ENCODE measurements at regions of chr16 and their contacts with region 1.

Region 1: GRCh38 chr16:31873556-31874365 is at the start of gene ZNF267:
- DNase-seq: peak; percentile 93 to 96
- ATAC-seq: peak; percentile 96 to 100 (median 97)
- H3K4me3 ChIP-seq: peak within 1 kb of the TSS; percentile 99
- H3K27ac ChIP-seq: peak within 1 kb of the TSS; percentile 89
- H3K4me1 ChIP-seq: no peaks in the 10 kb centered on the region
- H3K27me3 ChIP-seq: no peaks in the 10 kb centered on the region
- CTCF ChIP-seq: no peak
- total RNA-seq, gene ZNF267: 4.1 to 9.9 (median 8.3) TPM

Region 2: DNA sequence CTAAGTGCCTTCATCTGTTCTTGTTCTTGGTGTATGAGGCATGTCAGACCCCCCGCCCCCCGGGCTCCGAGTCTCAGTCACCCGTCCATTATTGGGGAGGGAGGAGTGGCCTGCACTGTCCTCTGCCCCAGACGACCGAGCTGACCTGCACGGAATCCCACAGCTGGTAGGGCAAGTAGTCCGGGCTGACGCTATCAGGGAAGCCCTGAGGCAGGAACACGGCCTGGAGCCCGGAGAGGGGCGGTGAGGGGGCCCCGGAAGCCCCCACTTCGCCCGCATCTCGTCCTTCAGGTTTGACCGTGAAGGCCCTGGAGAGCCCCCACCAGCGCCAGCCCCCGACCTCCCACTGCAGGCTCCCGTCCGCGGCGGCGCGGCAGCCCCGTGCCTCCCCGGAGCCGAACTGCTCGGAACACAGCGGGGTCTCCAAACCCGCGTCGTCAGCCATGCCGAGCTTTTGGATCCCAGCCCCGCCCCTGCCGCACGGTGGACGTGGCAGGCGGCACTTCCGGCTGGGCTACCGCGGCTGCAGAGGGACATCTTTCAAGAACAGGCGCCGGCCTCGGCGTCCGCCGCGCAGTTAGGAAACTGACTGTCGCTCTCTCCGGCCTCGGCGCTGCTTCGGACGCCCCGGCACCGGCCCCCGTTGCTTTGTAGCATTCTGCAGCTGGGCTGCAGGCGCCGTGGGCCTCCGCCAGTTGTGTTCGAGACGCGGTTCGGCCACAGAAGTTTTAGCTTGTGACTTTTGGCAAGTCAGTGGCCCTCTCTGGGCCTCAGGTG is 365.6 kb before region 1 on chr16 and contains the start of gene RUSF1:
- intact Hi-C with region 1: loop called in 1 of 2 experiments (anchors 10 kb)
- DNase-seq: peak; percentile 92 to 96
- ATAC-seq: peak; percentile 97 to 99 (median 98)
- H3K4me3 ChIP-seq: peak within 1 kb of the TSS; percentile 92
- H3K27ac ChIP-seq: peak within 1 kb of the TSS; percentile 96
- H3K4me1 ChIP-seq: peaks cover 21% of the 10 kb centered on the region
- H3K27me3 ChIP-seq: no peaks in the 10 kb centered on the region
- CTCF ChIP-seq: no peak
- total RNA-seq, gene RUSF1: 6.9 to 16.2 (median 11.9) TPM

Region 3: DNA sequence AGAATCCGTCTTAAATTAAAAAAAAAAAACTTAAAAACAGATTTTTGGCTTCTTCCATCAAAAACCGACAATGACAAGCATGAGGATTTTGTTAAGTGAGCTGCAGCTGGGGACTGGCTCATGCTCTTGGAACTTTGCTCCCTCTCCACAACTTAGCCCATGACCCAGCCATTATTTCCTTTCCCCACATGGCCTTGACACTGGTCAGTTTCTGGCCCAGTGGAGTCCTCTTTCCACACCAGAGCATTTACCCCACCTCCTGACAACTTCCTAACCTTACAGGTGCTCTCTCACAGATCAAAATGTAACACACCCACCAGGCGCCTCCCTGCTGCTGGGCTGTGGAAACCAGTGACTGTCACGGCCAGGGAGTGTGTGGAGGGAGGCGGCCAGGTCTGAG is 62.9 kb before region 1 on chr16:
- intact Hi-C with region 1: no loop called
- DNase-seq: no peak
- ATAC-seq: no peak
- H3K4me3 ChIP-seq: no peak overlapping the region
- H3K27ac ChIP-seq: no peak overlapping the region
- H3K4me1 ChIP-seq: no peaks in the 10 kb centered on the region
- H3K27me3 ChIP-seq: no peaks in the 10 kb centered on the region
- CTCF ChIP-seq: no peak

Region 4: DNA sequence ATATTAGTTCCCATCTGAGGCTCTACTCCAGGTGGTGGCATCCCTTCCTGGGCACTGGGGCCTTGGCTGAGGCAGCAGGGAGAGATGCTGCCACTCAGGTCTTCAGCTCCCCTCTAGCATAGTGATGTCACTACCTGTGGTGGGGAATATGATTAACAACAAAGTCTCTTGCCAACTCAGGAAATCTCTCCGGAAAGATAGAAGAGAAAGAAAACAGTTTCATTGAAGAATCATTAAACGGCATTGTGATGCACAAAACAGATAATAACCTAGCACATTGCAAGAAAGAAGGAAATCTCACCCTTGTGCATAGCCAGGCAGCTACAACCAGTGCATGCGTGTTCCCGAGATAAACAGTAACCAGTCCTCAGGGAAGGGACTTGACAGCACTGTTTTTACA is 12.3 kb before region 1 on chr16:
- intact Hi-C with region 1: loop called in 1 of 2 experiments (anchors 1 kb)
- DNase-seq: no peak
- ATAC-seq: no peak
- H3K4me3 ChIP-seq: no peak overlapping the region
- H3K27ac ChIP-seq: no peak overlapping the region
- H3K4me1 ChIP-seq: no peaks in the 10 kb centered on the region
- H3K27me3 ChIP-seq: no peaks in the 10 kb centered on the region
- CTCF ChIP-seq: no peak

Measured in psoas muscle (tissue), 8 donors.